CD4-positive, alpha-beta memory T cell (primary cell): ENCODE measurements at regions of chr12 and their contacts with region 1.

Region 1: DNA sequence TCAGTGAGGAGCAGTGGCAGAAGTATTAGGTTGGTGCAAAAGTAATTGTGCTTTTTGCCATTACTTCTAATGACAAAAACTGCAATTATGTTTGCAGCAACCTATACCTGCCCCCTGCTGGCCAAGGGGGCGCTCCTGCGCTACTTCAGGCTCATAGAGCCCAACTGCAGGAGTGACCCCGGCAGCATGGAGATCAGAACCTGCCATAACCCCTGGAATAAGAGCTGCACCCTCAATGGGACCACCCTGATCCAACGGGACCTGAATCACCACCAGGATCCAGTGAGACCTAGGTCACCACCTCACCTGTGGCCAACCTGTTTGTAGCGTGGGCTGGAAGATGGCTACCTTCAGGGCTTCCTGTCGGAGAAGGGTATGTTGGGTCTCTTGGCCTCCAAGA is 8.2 kb upstream of the C12orf42 start:
- DNase-seq: peak; percentile 46 to 63 (median 57)
- H3K4me3 ChIP-seq: no peak overlapping the region
- H3K4me3 Mint-ChIP-seq: no peak overlapping the region
- H3K27ac ChIP-seq: no peak overlapping the region
- H3K27ac Mint-ChIP-seq: peak overlapping the region in 1 of 7 donors; percentile 38
- H3K4me1 ChIP-seq: no peaks in the 10 kb centered on the region
- H3K4me1 Mint-ChIP-seq: peaks cover 0 to 4% (median 2%) of the 10 kb centered on the region in 4 donors
- H3K27me3 ChIP-seq: no peaks in the 10 kb centered on the region
- H3K27me3 Mint-ChIP-seq: no peaks in the 10 kb centered on the region

Region 2: DNA sequence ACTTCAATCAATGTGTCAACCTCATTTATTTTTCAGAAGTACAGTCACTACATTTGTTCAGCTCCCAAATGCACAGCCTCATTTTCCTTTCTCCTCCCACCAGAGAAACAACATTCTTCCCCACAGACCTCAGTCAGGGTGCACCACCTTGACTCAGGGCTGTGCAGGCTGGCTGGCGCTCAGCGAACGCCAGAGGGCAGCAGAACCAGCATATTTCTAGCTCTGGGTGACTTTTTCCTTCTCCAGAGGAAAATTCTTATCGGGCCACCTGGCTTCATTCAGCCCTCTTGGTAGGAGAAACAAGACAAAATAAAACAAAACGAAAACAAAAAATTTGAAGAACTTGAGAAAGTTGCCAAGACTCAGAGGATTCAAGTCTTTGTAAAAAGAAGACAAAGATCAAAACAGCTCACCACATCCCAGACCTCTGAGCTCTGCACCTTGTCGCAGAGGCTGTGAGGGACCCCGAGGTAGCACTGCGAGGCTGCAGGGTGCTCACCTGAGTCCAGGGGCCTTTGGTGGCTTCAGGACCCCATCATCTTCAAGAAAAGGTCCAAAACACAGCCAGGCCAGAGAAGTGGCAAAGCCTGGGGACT is 620.7 kb before region 1 on chr12:
- CTCF ChIA-PET with region 1: interaction called, 6 read pairs
- POLR2A ChIA-PET with region 1: no interaction called
- intact Hi-C with region 1: loop called (anchors 1 kb)
- DNase-seq: peak in 3 of 5 donors; percentile 4 to 17 (median 17)
- H3K4me3 ChIP-seq: no peak overlapping the region
- H3K4me3 Mint-ChIP-seq: no peak overlapping the region
- H3K27ac ChIP-seq: no peak overlapping the region
- H3K27ac Mint-ChIP-seq: no peak overlapping the region
- H3K4me1 ChIP-seq: no peaks in the 10 kb centered on the region
- H3K4me1 Mint-ChIP-seq: peaks cover 0 to 5% (median 4%) of the 10 kb centered on the region in 4 donors
- H3K27me3 ChIP-seq: no peaks in the 10 kb centered on the region
- H3K27me3 Mint-ChIP-seq: peaks cover 2 to 3% of the 10 kb centered on the region in 2 donors

Region 3: GRCh38 chr12:102948941-102949352 is 555.0 kb before region 1 on chr12:
- CTCF ChIA-PET with region 1: interaction called, 16 read pairs
- POLR2A ChIA-PET with region 1: no interaction called
- intact Hi-C with region 1: loop called (anchors 1 kb)
- DNase-seq: peak in 4 of 5 donors; percentile 19 to 34 (median 21)
- H3K4me3 ChIP-seq: no peak overlapping the region
- H3K4me3 Mint-ChIP-seq: peak overlapping the region in 1 of 8 donors; percentile 13
- H3K27ac ChIP-seq: no peak overlapping the region
- H3K27ac Mint-ChIP-seq: no peak overlapping the region
- H3K4me1 ChIP-seq: no peaks in the 10 kb centered on the region
- H3K4me1 Mint-ChIP-seq: peaks cover 0 to 3% (median 0%) of the 10 kb centered on the region in 4 donors
- H3K27me3 ChIP-seq: peaks cover 5% of the 10 kb centered on the region
- H3K27me3 Mint-ChIP-seq: peaks cover 32 to 37% of the 10 kb centered on the region in 2 donors

Region 4: GRCh38 chr12:103326190-103326589 is 177.8 kb before region 1 on chr12:
- CTCF ChIA-PET with region 1: interaction called, 3 read pairs
- POLR2A ChIA-PET with region 1: no interaction called
- intact Hi-C with region 1: loop called (anchors 1 kb)
- DNase-seq: no peak
- H3K4me3 ChIP-seq: no peak overlapping the region
- H3K4me3 Mint-ChIP-seq: no peak overlapping the region
- H3K27ac ChIP-seq: no peak overlapping the region
- H3K27ac Mint-ChIP-seq: no peak overlapping the region
- H3K4me1 ChIP-seq: no peaks in the 10 kb centered on the region
- H3K4me1 Mint-ChIP-seq: no peaks in the 10 kb centered on the region
- H3K27me3 ChIP-seq: no peaks in the 10 kb centered on the region
- H3K27me3 Mint-ChIP-seq: no peaks in the 10 kb centered on the region

Region 5: GRCh38 chr12:103369929-103370328 is 134.0 kb before region 1 on chr12:
- CTCF ChIA-PET with region 1: no interaction called
- POLR2A ChIA-PET with region 1: no interaction called
- intact Hi-C with region 1: no loop called
- DNase-seq: no peak
- H3K4me3 ChIP-seq: no peak overlapping the region
- H3K4me3 Mint-ChIP-seq: no peak overlapping the region
- H3K27ac ChIP-seq: no peak overlapping the region
- H3K27ac Mint-ChIP-seq: no peak overlapping the region
- H3K4me1 ChIP-seq: no peaks in the 10 kb centered on the region
- H3K4me1 Mint-ChIP-seq: peaks cover 4 to 20% (median 8%) of the 10 kb centered on the region in 4 donors
- H3K27me3 ChIP-seq: no peaks in the 10 kb centered on the region
- H3K27me3 Mint-ChIP-seq: no peaks in the 10 kb centered on the region

Region 6: GRCh38 chr12:103401421-103401820 is 102.6 kb before region 1 on chr12:
- CTCF ChIA-PET with region 1: interaction called, 4 read pairs
- POLR2A ChIA-PET with region 1: no interaction called
- intact Hi-C with region 1: loop called (anchors 2 kb)
- DNase-seq: peak in 3 of 5 donors; percentile 4 to 17 (median 12)
- H3K4me3 ChIP-seq: no peak overlapping the region
- H3K4me3 Mint-ChIP-seq: no peak overlapping the region
- H3K27ac ChIP-seq: no peak overlapping the region
- H3K27ac Mint-ChIP-seq: no peak overlapping the region
- H3K4me1 ChIP-seq: no peaks in the 10 kb centered on the region
- H3K4me1 Mint-ChIP-seq: peaks cover 0 to 2% (median 0%) of the 10 kb centered on the region in 4 donors
- H3K27me3 ChIP-seq: no peaks in the 10 kb centered on the region
- H3K27me3 Mint-ChIP-seq: no peaks in the 10 kb centered on the region

Region 7: DNA sequence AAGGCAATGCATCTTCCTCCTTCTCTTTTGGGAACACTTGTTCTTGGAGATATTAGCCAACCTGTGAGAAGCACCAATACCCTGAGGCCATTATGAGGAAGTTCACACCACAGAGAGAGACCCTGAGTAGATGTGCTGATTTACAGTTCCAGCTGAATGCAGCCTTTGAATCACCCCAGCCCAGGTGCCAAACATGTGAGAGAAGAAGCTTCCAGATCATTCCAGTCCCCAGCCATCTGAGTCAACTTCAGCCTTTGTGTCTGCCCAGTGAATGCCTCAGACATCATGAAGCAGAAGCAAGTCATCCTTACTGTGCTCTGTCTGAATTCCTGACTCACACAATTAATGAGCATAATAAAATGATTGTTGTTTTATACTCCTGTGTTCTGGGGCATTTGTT is 33.3 kb before region 1 on chr12:
- CTCF ChIA-PET with region 1: no interaction called
- POLR2A ChIA-PET with region 1: no interaction called
- intact Hi-C with region 1: no loop called
- DNase-seq: no peak
- H3K4me3 ChIP-seq: no peak overlapping the region
- H3K4me3 Mint-ChIP-seq: no peak overlapping the region
- H3K27ac ChIP-seq: no peak overlapping the region
- H3K27ac Mint-ChIP-seq: no peak overlapping the region
- H3K4me1 ChIP-seq: no peaks in the 10 kb centered on the region
- H3K4me1 Mint-ChIP-seq: peaks cover 6 to 19% (median 11%) of the 10 kb centered on the region in 4 donors
- H3K27me3 ChIP-seq: no peaks in the 10 kb centered on the region
- H3K27me3 Mint-ChIP-seq: peaks cover 0 to 1% of the 10 kb centered on the region in 2 donors